ENCODE measurements at regions of chr1 and their contacts with region 1.

Region 1: GRCh38 chr1:208025031-208025430 is 114.1 kb upstream of the CD34 start:
- DNase-seq: no peak
- H3K4me3 ChIP-seq: no peak overlapping the region
- H3K4me3 Mint-ChIP-seq: no peak overlapping the region
- H3K27ac Mint-ChIP-seq: no peak overlapping the region
- H3K4me1 ChIP-seq: no peaks in the 10 kb centered on the region
- H3K4me1 Mint-ChIP-seq: peaks cover 6% of the 10 kb centered on the region
- H3K27me3 ChIP-seq: no peaks in the 10 kb centered on the region; the same call in 1 of the 2 replicates
- H3K27me3 Mint-ChIP-seq: peaks cover 5% of the 10 kb centered on the region
- CTCF ChIP-seq: no peak

Region 2: DNA sequence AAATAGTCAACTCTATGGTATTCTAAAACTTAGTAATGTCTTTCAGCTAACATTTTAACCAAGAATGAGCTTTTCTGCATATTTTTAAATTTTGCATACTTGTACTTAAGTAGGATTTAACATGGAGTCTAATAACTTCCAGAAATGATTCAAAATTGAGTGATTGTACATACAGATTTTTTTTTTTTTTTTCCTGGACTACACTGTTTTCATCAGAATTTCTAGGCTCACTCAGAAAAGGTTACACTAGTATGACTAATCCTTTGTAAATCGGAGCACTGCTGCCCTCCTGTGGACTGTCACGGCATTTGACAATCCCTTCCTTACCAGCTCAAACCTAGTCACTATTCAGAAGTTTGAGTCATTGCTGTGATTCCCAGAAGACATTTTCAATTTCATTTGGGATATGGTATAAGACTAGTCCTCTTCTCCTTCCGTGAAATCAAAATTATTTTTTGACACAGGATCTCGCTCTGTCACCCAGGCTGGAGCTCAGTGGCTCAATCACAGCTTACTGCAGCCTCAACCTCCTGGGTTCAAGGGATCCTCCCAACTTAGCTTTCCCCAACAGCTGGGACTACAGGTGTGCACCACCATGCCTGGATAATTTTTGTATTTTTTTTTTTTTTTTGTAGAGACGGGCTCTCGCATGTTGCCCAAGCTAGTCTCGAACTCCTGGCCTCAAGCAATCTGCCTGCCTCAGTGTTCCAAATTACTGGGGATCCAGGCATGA is 227.6 kb before region 1 on chr1:
- CTCF ChIA-PET with region 1: no interaction called
- POLR2A ChIA-PET with region 1: no interaction called
- intact Hi-C with region 1: no loop called
- DNase-seq: peak; percentile 81 to 83
- H3K4me3 ChIP-seq: no peak overlapping the region
- H3K4me3 Mint-ChIP-seq: no peak overlapping the region
- H3K27ac Mint-ChIP-seq: no peak overlapping the region
- H3K4me1 ChIP-seq: peaks cover 9% of the 10 kb centered on the region; the same call in 1 of the 2 replicates
- H3K4me1 Mint-ChIP-seq: peaks cover 17% of the 10 kb centered on the region
- H3K27me3 ChIP-seq: no peaks in the 10 kb centered on the region
- H3K27me3 Mint-ChIP-seq: no peaks in the 10 kb centered on the region
- CTCF ChIP-seq: peak; percentile 65 to 80

Region 3: DNA sequence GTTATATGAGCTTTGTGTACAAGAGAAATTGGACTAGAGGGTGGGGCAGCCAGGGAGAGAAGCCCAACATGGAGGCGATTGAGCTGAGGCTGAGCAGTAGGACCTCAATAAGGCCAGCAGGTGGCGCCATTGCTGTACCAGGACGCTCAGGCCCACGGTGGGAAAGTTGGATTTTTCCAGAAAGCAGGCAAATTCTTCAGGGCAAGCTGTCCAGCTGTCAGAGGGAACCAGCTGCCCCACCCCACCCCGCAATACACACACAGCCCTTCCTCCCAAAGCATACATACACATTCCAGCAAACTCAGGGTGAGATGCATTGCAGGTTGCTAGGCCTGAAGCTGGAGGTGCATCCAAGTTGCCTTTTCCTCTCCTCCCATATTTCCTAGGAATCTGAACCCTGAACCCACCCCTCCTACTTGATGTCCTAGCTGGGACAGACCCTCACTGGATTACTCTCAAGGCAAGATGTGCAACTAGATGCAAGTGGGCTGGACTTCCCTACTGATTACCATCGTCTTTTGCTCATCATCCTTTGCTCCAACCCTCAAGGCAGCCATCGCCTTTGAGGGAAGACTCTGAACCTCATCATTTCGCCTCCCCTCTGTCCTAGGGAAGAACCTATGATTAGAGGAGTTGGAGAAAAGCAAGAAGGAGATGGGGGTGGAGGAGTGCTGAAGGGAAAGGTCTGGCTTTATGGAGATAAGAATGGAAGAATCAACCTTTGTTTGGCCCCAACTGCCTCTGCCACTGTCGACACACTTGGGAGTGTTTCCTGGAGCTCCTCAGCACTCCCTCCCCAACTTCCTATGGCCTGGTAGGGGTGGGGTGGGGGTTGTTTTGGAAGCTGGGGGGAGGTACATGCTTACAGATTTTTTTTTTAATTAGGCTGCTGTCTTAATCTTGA is 139.7 kb before region 1 on chr1:
- CTCF ChIA-PET with region 1: interaction called, 17 read pairs
- POLR2A ChIA-PET with region 1: no interaction called
- intact Hi-C with region 1: no loop called
- DNase-seq: peak; percentile 87
- H3K4me3 ChIP-seq: no peak overlapping the region
- H3K4me3 Mint-ChIP-seq: no peak overlapping the region
- H3K27ac Mint-ChIP-seq: peak overlapping the region; percentile 42
- H3K4me1 ChIP-seq: peaks cover 8% of the 10 kb centered on the region
- H3K4me1 Mint-ChIP-seq: peaks cover 6% of the 10 kb centered on the region
- H3K27me3 ChIP-seq: no peaks in the 10 kb centered on the region
- H3K27me3 Mint-ChIP-seq: peaks cover under 1% of the 10 kb centered on the region
- CTCF ChIP-seq: peak; percentile 94 to 95

Region 4: DNA sequence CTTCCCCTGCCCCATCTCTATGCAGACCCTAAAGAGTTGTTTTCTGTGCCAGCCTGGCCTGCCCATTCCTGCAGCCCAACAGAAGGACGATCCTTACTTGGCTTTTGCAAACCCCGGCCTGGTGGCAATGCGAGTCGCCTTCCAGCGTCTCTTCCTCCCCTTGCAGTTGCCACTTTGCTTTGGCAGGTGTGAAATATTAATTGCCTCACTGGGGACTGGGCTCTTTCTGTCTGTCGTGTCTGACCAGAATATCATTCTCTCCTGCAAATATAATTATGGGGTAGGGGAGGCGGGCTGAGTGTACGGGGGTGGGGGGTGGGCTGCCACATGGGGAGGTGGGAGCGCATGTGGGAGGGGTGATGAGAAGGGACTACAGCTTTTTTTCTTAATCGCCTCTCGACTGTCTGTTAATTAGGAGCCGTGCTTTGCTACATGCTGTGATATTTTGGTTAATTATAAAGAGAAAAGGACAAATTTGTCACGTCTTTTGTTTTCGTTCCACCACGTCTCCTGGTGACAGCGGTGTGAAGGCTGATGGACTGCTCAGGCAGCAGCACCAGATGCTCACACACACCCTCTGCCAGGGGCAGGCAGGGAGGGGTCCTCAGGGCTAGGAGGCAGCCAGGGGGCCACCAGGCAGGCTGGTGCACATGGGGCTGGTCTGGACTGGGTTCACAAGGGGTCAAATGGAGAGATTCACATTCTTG is 34.0 kb before region 1 on chr1:
- CTCF ChIA-PET with region 1: no interaction called
- POLR2A ChIA-PET with region 1: no interaction called
- intact Hi-C with region 1: no loop called
- DNase-seq: no peak
- H3K4me3 ChIP-seq: no peak overlapping the region
- H3K4me3 Mint-ChIP-seq: no peak overlapping the region
- H3K27ac Mint-ChIP-seq: no peak overlapping the region
- H3K4me1 ChIP-seq: no peaks in the 10 kb centered on the region
- H3K4me1 Mint-ChIP-seq: no peaks in the 10 kb centered on the region
- H3K27me3 ChIP-seq: no peaks in the 10 kb centered on the region
- H3K27me3 Mint-ChIP-seq: peaks cover 29% of the 10 kb centered on the region
- CTCF ChIP-seq: no peak

Region 5: GRCh38 chr1:208093754-208094719 is 69.0 kb after region 1 on chr1:
- CTCF ChIA-PET with region 1: interaction called, 9 read pairs
- POLR2A ChIA-PET with region 1: no interaction called
- intact Hi-C with region 1: loop called (anchors 1 kb)
- DNase-seq: peak; percentile 74 to 77
- H3K4me3 ChIP-seq: no peak overlapping the region
- H3K4me3 Mint-ChIP-seq: no peak overlapping the region
- H3K27ac Mint-ChIP-seq: no peak overlapping the region
- H3K4me1 ChIP-seq: no peaks in the 10 kb centered on the region
- H3K4me1 Mint-ChIP-seq: no peaks in the 10 kb centered on the region
- H3K27me3 ChIP-seq: no peaks in the 10 kb centered on the region
- H3K27me3 Mint-ChIP-seq: no peaks in the 10 kb centered on the region
- CTCF ChIP-seq: peak; percentile 81 to 92

Region 6: GRCh38 chr1:208132287-208132883 is 107.4 kb after region 1 on chr1:
- CTCF ChIA-PET with region 1: interaction called, 23 read pairs
- POLR2A ChIA-PET with region 1: no interaction called
- intact Hi-C with region 1: no loop called
- DNase-seq: peak; percentile 87 to 91
- H3K4me3 ChIP-seq: no peak overlapping the region
- H3K4me3 Mint-ChIP-seq: peak overlapping the region; percentile 59
- H3K27ac Mint-ChIP-seq: no peak overlapping the region
- H3K4me1 ChIP-seq: peaks cover 19% of the 10 kb centered on the region
- H3K4me1 Mint-ChIP-seq: peaks cover 18% of the 10 kb centered on the region
- H3K27me3 ChIP-seq: no peaks in the 10 kb centered on the region
- H3K27me3 Mint-ChIP-seq: no peaks in the 10 kb centered on the region
- CTCF ChIP-seq: peak; percentile 74 to 93

Region 7: GRCh38 chr1:208245185-208245705 is 220.2 kb after region 1 on chr1:
- CTCF ChIA-PET with region 1: interaction called, 43 read pairs
- POLR2A ChIA-PET with region 1: no interaction called
- intact Hi-C with region 1: loop called (anchors 1 kb)
- DNase-seq: peak; percentile 83 to 86
- H3K4me3 ChIP-seq: peak overlapping the region; percentile 6; the same call in 1 of the 2 replicates
- H3K4me3 Mint-ChIP-seq: peak overlapping the region; percentile 88
- H3K27ac Mint-ChIP-seq: no peak overlapping the region
- H3K4me1 ChIP-seq: peaks cover 6% of the 10 kb centered on the region
- H3K4me1 Mint-ChIP-seq: peaks cover 7% of the 10 kb centered on the region
- H3K27me3 ChIP-seq: 0 out of 2 replicates have a peak, but pooled peaks cover 1% of the 10 kb centered on the region
- H3K27me3 Mint-ChIP-seq: peaks cover 16% of the 10 kb centered on the region
- CTCF ChIP-seq: peak; percentile 67 to 82